ENCODE measurements at regions of chr10 and their contacts with region 1.

Region 1: DNA sequence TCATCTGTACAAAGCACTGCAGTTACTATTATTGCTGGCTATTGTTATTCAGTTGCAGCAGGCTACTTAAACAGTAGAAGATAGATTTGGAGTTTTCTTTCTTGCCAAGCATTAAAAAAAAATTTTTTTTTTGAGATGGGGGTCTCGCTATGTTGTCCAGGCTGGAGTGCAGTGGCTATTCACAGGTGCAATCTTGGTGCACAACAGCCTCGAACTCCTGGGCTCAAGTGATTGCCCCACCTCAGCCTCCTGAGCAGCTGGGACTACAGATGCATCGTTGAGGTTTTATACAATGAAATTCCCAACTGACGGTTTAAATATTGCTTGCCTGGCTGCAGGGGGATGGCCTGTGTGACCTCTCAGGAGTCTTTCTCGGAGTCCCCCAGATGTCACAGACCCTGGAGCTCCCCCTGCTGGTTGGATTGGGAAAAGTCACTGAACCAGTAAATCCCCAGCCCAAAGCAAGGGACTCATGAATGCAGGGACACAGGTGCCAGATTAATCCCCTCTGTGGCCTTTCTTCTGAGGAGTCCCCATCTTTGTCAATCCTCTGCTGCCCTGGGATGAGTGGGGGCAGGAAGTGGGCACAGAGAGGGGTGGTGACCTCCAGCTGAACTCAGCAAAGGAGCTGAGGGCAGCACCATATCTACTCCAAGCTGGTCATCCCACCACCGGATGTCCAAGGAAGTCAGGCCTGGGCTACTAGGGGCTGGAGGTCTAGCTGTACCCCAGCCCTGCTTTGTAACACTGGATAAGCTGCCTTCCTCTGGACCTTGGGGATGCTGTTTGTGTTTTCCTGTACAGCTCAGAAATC is 149.6 kb downstream of the C10orf105 start:
- DNase-seq: peak in 8 of 10 donors; percentile 57 to 94 (median 85)

Region 2: GRCh38 chr10:71359364-71360046 is 210.5 kb before region 1 on chr10:
- intact Hi-C with region 1: no loop called
- DNase-seq: peak in 3 of 10 donors; percentile 13 to 79 (median 62)

Region 3: GRCh38 chr10:71600849-71601248 is 30.9 kb after region 1 on chr10:
- intact Hi-C with region 1: no loop called
- DNase-seq: peak in 1 of 10 donors; percentile 1

Region 4: GRCh38 chr10:71696628-71697326 is 126.8 kb after region 1 on chr10:
- intact Hi-C with region 1: loop called (anchors 5 kb)
- DNase-seq: peak in 7 of 10 donors; percentile 50 to 92 (median 64)